ENCODE measurements at regions of chr2 and their contacts with region 1.

Region 1: DNA sequence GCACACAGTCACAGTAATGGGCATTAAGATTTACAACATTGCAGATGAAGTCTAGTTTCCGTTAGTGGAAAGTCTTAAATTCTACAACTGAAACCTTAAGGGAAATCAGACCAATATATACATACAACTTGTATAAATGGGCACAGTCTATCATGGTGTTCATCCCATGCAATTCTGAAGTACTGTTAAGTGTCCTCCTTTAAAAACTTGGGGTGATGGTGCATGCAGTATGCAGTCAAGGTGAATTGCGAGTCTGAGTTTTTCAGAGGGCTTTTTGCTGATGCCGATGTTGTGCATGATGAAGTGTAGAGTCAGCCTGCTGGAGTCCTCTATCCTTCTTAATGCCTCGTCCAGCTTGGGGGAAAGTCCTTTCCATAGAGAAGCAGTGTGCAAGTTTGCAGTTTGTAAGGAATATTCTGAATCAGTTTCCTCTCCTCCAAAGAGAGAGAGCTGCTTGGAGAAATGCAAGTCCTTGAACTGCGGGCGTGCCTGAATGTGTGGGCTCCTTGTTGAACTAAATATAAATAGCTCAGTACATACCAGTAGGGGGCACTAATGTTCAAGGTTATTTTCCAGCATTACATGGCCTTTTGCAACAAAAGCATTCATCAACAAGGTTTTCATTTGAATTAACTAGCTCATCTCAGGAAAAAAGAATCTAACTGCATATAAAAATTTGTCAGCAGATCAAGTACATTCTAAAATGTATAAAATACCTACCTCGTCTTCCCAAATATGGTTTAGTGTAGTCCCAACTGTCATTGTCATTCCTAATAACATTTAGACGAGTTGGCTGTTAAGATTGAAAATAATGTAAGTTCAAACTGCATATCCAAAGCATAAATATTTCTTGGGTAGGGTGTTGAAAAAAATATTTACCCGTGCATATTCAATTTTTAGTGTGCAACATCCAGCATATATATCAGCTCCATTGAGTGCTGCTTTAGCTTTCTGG is 21.3 kb downstream of the HNRNPLL start:
- DNase-seq: peak in 6 of 10 donors; percentile 17 to 90 (median 64)

Region 2: GRCh38 chr2:38370664-38371063 is 210.8 kb before region 1 on chr2:
- intact Hi-C with region 1: no loop called
- DNase-seq: no peak

Region 3: GRCh38 chr2:38554973-38555595 is 26.4 kb before region 1 on chr2:
- intact Hi-C with region 1: no loop called
- DNase-seq: peak in 1 of 10 donors; percentile 49

Region 4: GRCh38 chr2:38728694-38729093 is 147.2 kb after region 1 on chr2:
- intact Hi-C with region 1: loop called (anchors 5 kb)
- DNase-seq: no peak

Region 5: DNA sequence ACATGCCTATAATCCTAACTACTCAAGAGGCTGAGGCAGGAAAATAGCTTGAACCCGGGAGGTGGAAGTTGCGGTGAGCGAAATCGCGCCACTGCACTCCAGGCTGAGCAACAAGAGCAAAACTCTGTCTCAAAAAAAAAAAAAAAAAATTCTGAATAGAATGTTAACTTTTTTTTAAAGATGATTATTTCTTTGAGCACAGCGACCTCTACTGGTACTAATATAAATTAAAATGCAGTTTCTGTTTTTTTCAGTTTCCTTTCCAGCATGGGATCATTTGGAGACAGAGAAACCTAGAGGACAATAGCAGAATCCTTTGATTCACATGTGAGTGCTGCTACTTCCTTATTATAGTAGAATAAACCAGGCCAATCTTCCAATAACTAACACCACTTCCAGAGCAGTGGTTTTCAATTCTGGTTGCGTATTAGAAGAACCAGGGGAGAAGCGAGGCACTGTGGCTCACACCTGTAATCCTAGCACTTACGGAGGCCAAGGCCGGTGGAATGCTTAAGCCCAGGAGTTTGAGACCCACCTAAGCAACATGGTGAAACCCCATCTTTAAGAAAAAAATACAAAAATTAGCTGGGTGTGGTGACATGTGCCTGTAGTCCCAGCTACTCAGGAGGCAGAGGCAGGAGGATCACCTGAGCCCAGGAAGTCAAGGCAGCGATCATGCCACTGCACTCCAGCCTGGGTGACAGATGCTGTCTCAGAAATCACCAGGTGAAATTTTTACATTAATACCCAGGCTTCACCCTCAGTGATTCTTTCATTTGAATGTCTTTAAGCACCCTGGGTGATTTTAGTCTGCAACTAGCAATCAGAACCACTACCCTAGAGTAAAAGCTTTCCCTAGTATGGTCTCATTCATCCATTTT is 159.6 kb after region 1 on chr2:
- intact Hi-C with region 1: loop called (anchors 2 kb)
- DNase-seq: no peak

Measured in posterior cingulate gyrus (tissue), 11 donors.